ENCODE measurements at regions of chr5 and their contacts with region 1.

Region 1: GRCh38 chr5:175657593-175658271 is at the start of gene HRH2:
- DNase-seq: peak; percentile 52 to 60
- ATAC-seq: peak; percentile 57 to 82 (median 69)
- H3K4me3 ChIP-seq: peak within 1 kb of the TSS; percentile 44 to 80 (median 68)
- H3K27ac ChIP-seq: peak within 1 kb of the TSS in 9 of 10 donors; percentile 79 to 93 (median 87)
- H3K4me1 ChIP-seq: peaks cover 0 to 71% (median 13%) of the 10 kb centered on the region in 9 donors
- H3K27me3 ChIP-seq: peaks cover 0 to 35% (median 10%) of the 10 kb centered on the region in 7 donors
- CTCF ChIP-seq: no peak
- total RNA-seq, gene HRH2: 36.5 to 78.7 (median 52.8) TPM

Region 2: DNA sequence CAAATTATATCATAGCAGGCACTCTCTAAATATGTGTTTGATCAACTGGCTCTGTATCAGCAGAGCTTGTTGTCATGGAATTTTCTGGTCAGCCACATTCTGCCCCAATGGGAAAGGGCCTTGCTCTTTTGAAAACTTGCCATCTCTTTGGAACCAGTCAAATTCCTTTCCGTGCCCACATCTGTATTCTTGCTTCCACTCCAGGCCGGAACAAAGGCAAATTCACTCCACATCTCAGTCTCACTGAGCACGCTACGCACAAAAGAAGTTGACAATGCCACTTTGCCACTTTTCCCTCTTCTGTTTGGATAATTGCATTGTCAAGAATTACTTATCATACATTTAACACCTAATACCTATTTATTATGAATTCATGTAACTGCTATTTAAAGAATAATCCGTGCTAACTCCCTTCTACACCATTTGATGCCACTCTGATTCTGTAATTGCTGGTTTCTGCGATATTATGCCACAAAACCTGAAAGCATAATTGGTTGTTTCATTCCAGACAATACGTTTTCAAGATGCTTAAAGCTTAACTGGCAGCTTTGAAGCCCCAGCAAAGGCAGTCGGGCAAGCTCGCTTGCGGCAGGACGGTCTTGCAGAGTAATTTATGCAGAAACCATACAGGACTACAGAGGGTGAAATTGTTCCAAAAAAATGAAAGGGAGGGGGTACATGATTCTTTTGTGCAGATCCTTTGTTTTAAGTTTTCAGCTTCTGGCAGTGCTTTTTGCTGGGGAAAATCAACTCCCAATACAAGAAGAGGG is 655.7 kb before region 1 on chr5:
- intact Hi-C with region 1: no loop called
- DNase-seq: no peak
- ATAC-seq: no peak
- H3K4me3 ChIP-seq: no peak overlapping the region
- H3K27ac ChIP-seq: no peak overlapping the region
- H3K4me1 ChIP-seq: no peaks in the 10 kb centered on the region
- H3K27me3 ChIP-seq: peaks cover 0 to 27% (median 13%) of the 10 kb centered on the region in 7 donors
- CTCF ChIP-seq: no peak

Region 3: DNA sequence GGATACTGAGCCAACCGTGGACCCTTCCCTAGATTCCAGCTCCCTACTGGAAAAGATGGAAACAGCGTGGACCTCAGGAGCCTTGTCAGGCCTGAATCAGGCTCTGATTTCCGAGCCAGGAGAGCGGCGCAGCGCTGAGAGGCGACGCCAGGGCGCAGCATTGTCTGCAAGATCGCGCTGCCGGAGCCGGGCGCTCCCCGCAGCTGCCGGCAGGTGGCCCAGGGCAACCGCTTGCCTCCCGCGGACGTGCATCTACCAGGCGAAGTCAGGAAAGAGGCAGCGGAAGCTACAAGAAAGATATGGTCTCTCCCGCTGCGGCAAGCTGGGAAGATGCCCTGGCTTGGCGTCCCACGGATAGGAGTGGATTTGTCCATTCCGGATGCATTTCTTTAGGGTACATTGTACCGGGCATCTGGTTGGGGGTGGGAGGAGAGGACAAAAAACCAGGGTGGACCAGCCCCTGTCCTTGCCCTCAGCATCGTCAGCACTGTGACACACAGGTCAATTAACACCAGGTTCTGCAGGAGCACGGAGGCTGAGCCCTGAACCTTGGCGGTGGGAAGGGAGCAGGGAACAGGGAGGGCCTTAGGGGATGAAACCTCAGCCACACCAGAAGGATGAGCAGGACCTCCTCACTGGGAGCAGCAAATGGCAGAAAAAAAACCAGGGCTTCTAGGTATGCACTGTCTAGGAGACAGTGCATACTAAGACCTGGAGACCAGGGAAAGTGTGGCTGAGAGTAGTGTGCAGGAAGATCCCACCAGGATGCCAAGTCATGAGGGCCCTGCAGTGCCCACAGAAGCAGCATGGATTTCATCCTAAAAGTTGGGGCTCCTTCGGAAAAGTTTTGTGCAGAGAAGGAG is 123.4 kb before region 1 on chr5:
- intact Hi-C with region 1: loop called in 1 of 10 experiments (anchors 5 kb)
- DNase-seq: peak; percentile 70 to 81
- ATAC-seq: peak; percentile 91 to 97 (median 96)
- H3K4me3 ChIP-seq: peak overlapping the region in 2 of 10 donors; percentile 9 to 32
- H3K27ac ChIP-seq: no peak overlapping the region
- H3K4me1 ChIP-seq: peaks cover 0 to 17% (median 0%) of the 10 kb centered on the region in 9 donors
- H3K27me3 ChIP-seq: peaks cover 0 to 4% (median 0%) of the 10 kb centered on the region in 7 donors
- CTCF ChIP-seq: peak; percentile 83 to 100 (median 98)

Region 4: GRCh38 chr5:175696139-175696854 is 38.6 kb after region 1 on chr5:
- intact Hi-C with region 1: loop called in 1 of 10 experiments (anchors 5 kb)
- DNase-seq: peak; percentile 62 to 80
- ATAC-seq: peak; percentile 22 to 71 (median 58)
- H3K4me3 ChIP-seq: peak overlapping the region in 1 of 10 donors; percentile 7
- H3K27ac ChIP-seq: peak overlapping the region in 7 of 10 donors; percentile 3 to 88 (median 45)
- H3K4me1 ChIP-seq: peaks cover 10 to 57% (median 27%) of the 10 kb centered on the region in 9 donors
- H3K27me3 ChIP-seq: no peaks in the 10 kb centered on the region
- CTCF ChIP-seq: peak in 8 of 9 donors; percentile 20 to 78 (median 50)

Region 5: DNA sequence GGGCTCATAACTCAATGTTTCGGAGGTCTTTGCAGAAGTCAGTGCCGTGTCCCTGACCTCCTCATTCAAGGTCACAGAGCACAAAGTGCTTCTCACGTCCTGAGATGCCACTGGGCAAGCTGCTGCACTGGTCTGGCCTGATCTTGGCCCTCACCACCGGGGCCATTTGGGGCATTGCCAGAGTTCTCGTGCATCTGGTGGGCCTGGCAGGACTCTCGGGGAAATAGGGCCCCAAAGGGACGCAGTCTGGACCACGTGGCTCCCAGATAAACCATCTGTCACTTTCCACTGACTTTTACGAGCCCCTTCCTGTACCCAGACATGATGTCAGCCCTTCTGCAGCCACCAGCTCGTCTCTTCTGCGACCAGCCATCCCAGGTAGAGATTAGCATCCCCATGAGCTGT is 55.0 kb after region 1 on chr5:
- intact Hi-C with region 1: loop called in 4 of 10 experiments (anchors 2 to 5 kb)
- DNase-seq: no peak
- ATAC-seq: peak in 5 of 8 donors; percentile 10 to 63 (median 37)
- H3K4me3 ChIP-seq: no peak overlapping the region
- H3K27ac ChIP-seq: peak overlapping the region in 6 of 10 donors; percentile 17 to 72 (median 37)
- H3K4me1 ChIP-seq: peaks cover 2 to 57% (median 25%) of the 10 kb centered on the region in 9 donors
- H3K27me3 ChIP-seq: no peaks in the 10 kb centered on the region
- CTCF ChIP-seq: no peak